ENCODE measurements at regions of chr2 and their contacts with region 1.

Region 1: GRCh38 chr2:37389989-37390765 is 45.7 kb downstream of the QPCT start:
- DNase-seq: peak in 3 of 5 donors; percentile 30 to 34 (median 31)
- ATAC-seq: peak in 3 of 4 donors; percentile 67 to 93 (median 74)
- H3K4me3 ChIP-seq: no peak overlapping the region
- H3K27ac ChIP-seq: peak overlapping the region in 8 of 12 donors; percentile 26 to 87 (median 54)
- H3K4me1 ChIP-seq: peaks cover 0 to 46% (median 9%) of the 10 kb centered on the region in 12 donors
- H3K27me3 ChIP-seq: no peaks in the 10 kb centered on the region
- CTCF ChIP-seq: no peak
- POLR2A ChIP-seq: no peak

Region 2: DNA sequence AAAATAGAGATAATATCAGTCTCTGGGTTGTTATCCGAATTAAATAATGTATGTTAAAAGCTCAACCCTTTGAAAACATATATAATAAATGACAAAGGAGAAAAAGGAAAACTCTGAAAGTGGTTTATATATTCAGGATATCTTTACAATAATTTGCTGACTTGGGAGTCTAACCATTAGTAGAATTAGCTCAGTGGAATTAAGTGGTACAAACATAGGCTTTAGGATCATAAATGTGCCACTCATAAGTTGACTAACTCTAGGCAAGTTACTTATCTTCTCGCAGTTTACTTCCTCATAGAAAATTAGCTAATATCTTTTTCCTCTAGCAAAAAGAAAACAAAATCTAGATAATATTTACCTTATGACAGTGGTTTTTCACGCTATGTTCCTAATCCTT is 350.6 kb before region 1 on chr2:
- intact Hi-C with region 1: no loop called
- DNase-seq: no peak
- ATAC-seq: no peak
- H3K4me3 ChIP-seq: no peak overlapping the region
- H3K27ac ChIP-seq: no peak overlapping the region
- H3K4me1 ChIP-seq: no peaks in the 10 kb centered on the region
- H3K27me3 ChIP-seq: no peaks in the 10 kb centered on the region
- CTCF ChIP-seq: no peak
- POLR2A ChIP-seq: no peak

Region 3: DNA sequence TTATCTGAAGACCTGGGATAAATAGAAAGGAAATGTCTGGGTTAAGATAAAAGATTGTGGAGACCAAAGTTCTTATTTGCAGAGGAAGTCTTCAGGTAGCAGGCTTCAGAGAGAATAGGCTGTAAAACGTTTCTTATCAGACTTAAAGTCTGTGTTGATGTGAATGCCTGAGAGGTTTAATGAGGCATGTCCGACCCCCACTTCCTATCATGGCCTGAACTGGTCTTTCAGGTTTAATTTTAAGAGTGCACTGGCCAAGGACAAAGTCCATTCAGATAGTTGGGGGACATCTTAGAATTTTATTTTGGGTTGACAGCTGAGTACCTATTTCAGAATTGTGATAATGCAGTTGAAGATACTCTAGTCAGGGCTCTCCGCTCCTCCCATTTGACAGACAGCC is 894.8 kb after region 1 on chr2:
- intact Hi-C with region 1: loop called in 1 of 10 experiments (anchors 5 kb)
- DNase-seq: no peak
- ATAC-seq: no peak
- H3K4me3 ChIP-seq: no peak overlapping the region
- H3K27ac ChIP-seq: no peak overlapping the region
- H3K4me1 ChIP-seq: no peaks in the 10 kb centered on the region
- H3K27me3 ChIP-seq: peaks cover 0 to 5% (median 0%) of the 10 kb centered on the region in 9 donors
- CTCF ChIP-seq: no peak
- POLR2A ChIP-seq: no peak